ENCODE measurements at regions of chr6 and their contacts with region 1.

Region 1: GRCh38 chr6:47787620-47788497 is 6.0 kb downstream of the OPN5 start:
- DNase-seq: peak; percentile 80
- ATAC-seq: peak; percentile 80
- H3K4me3 Mint-ChIP-seq: no peak overlapping the region
- H3K27ac Mint-ChIP-seq: no peak overlapping the region
- H3K4me1 Mint-ChIP-seq: peaks cover 3% of the 10 kb centered on the region
- H3K27me3 Mint-ChIP-seq: peaks cover 30% of the 10 kb centered on the region

Region 2: DNA sequence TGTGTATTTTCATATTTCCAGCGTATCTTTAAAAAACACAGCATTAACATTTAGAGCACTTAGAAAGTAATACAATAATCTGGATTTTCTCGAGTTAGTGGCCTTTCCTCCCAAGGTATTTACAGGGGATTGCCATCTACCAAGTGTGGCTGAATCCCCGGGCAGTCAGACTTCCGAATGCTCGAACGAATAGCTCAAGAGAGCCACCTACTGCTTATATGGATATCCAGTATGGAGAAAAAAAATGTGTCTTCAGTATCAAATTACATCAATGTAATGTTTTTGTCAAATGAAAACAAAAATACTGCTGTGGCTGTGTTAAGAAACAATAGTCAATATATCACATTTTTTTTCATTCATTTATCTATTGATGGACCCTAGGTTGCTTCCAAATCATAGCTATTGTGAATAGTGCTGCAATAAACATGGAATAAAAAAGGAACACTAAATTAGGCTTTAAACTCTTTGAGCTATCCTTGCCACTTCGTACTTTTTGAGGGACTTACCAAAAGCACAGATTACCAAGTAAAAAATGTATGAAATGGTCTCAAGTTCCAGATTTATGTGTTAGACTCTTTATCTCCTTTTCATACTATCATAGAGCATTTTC is 977.6 kb after region 1 on chr6:
- CTCF ChIA-PET with region 1: interaction called, 4 read pairs
- POLR2A ChIA-PET with region 1: no interaction called
- intact Hi-C with region 1: loop called (anchors 1 to 5 kb)
- DNase-seq: peak; percentile 11
- ATAC-seq: no peak
- H3K4me3 Mint-ChIP-seq: no peak overlapping the region
- H3K27ac Mint-ChIP-seq: no peak overlapping the region
- H3K4me1 Mint-ChIP-seq: no peaks in the 10 kb centered on the region
- H3K27me3 Mint-ChIP-seq: no peaks in the 10 kb centered on the region

Region 3: GRCh38 chr6:49409951-49410542 is 1622.2 kb after region 1 on chr6:
- CTCF ChIA-PET with region 1: interaction called, 18 read pairs
- POLR2A ChIA-PET with region 1: no interaction called
- intact Hi-C with region 1: loop called (anchors 1 to 2 kb)
- DNase-seq: peak; percentile 80
- ATAC-seq: no peak
- H3K4me3 Mint-ChIP-seq: no peak overlapping the region
- H3K27ac Mint-ChIP-seq: no peak overlapping the region
- H3K4me1 Mint-ChIP-seq: no peaks in the 10 kb centered on the region
- H3K27me3 Mint-ChIP-seq: peaks cover 13% of the 10 kb centered on the region

Measured in activated CD4-positive, alpha-beta T cell treated with anti-CD3 and anti-CD28 coated beads for 36 hours (primary cell).